ENCODE measurements at regions of chr1 and their contacts with region 1.

Region 1: DNA sequence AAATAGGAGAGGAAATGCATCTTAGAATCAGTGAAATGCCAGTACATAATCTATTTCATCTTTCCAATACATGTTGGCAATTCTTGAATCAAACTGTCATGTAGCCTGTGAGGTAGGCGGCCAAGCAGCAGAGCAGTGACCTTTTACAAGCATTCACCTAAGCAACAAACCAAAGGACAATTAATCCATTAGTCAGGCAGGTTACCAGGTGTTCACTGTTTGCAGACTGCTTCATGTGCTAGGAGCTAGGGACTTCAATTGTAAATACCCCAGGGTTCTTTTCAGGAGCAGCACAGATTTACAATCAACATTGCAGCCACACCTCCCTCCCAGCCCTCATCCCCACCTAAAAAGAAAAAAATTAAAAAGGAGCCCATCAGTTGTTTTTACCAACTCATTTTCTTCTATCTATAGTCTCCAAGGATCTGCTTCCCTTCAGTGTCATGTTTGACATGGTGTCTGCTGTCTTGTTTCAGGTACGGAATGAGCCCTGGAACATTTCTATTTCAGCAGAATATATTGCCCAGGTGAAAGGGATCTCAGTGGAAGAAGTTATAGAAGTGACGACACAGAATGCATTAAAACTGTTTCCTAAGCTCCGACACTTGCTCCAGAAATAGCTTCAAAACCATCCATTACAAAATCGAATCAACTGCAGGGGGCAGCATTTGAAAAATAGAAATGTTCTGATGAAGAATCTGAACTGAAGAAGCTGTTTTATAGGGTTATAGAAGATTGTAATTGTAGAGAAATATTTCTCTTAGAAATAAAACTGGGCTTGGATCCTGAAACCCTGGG is 23.0 kb downstream of the TATDN3 start:
- DNase-seq: peak; percentile 27
- H3K4me3 ChIP-seq: no peak overlapping the region
- H3K27ac ChIP-seq: no peak overlapping the region
- H3K4me1 ChIP-seq: peaks cover 2% of the 10 kb centered on the region
- H3K27me3 ChIP-seq: no peaks in the 10 kb centered on the region
- CTCF ChIP-seq: no peak
- POLR2A ChIP-seq: no peak

Region 2: GRCh38 chr1:212994926-212995325 is 180.2 kb after region 1 on chr1:
- CTCF ChIA-PET with region 1: interaction called, 49 read pairs
- POLR2A ChIA-PET with region 1: no interaction called
- dilution Hi-C with region 1: no loop called
- intact Hi-C with region 1: loop called (anchors 1 kb)
- DNase-seq: no peak
- H3K4me3 ChIP-seq: no peak overlapping the region
- H3K27ac ChIP-seq: no peak overlapping the region
- H3K4me1 ChIP-seq: no peaks in the 10 kb centered on the region
- H3K27me3 ChIP-seq: no peaks in the 10 kb centered on the region
- CTCF ChIP-seq: no peak
- POLR2A ChIP-seq: no peak

Region 3: DNA sequence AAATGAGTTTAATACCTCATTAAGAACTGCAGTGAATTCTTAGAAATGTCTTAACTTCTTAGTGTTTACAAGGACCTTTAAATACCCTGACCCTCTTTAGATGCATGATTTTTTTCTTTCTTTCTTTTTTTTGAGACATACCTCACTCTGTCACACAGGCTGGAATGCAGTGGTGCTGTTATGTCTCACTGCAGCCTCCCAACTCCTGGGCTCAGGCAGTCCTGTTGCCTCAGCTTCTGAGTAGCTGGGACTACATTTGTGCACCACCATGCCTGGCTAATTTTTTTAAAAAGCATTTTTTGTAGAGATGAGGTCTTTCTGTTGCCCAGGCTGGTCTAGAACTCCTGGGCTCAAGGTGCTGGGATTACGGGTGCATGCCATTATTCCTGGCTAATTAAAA is 428.1 kb after region 1 on chr1:
- CTCF ChIA-PET with region 1: no interaction called
- POLR2A ChIA-PET with region 1: no interaction called
- dilution Hi-C with region 1: no loop called
- intact Hi-C with region 1: no loop called
- DNase-seq: no peak
- H3K4me3 ChIP-seq: no peak overlapping the region
- H3K27ac ChIP-seq: no peak overlapping the region
- H3K4me1 ChIP-seq: no peaks in the 10 kb centered on the region
- H3K27me3 ChIP-seq: no peaks in the 10 kb centered on the region
- CTCF ChIP-seq: no peak
- POLR2A ChIP-seq: no peak